K562 (cell line): ENCODE measurements at regions of chr4 and their contacts with region 1.

Region 1: DNA sequence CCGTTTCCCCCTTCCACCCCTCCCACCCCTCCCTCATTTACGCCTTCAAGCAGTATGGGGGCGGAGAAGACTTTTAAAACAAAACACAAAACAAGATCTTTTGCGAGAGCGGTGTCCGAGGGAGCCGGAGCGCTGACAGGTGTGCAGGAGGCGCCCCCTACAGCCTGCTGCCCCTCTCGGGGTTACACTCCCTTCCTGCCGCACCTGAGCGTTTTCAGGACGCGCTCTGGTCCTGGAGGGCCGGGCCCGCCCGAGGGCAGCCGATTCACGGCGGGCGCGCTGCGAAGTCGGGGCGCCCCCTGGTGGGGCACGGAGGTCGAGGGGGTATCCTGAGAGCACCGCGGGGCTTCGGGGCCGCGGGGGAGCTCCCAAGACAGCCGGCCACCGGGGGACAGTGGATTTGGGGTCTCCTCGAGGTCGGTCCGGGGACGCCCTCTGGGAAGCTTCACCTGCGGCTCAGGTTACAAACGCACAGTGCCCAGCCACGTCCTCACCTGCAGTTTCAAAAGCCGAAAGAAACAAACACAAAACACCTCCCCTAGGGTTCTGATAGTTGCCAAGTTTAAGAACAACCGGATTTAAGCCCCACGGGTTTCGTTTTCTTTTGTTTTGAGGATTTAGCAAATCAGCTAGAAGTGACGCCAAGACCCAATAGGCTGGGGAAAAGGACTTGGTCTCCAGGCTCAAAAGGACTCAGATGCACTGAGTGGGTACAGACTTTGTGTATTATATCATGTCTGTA is 8.0 kb upstream of the NEUROG2 start:
- DNase-seq: peak; percentile 73 to 80 (median 77)
- ATAC-seq: peak; percentile 94
- H3K4me3 ChIP-seq: peak overlapping the region; percentile 35
- H3K27ac ChIP-seq: no peak overlapping the region
- H3K4me1 ChIP-seq: peaks cover 0 to 12% of the 10 kb centered on the region in 2 experiments; a peak in 3 of 5 replicates
- H3K27me3 ChIP-seq: peaks cover 26 to 34% of the 10 kb centered on the region in 2 experiments
- CTCF ChIP-seq: peak; percentile 81 to 96 (median 87)
- EP300 ChIP-seq: no peak
- POLR2A ChIP-seq: no peak
- RAD21 ChIP-seq: peak; percentile 79 to 83

Region 2: GRCh38 chr4:111466811-111467604 is 1056.9 kb before region 1 on chr4:
- CTCF ChIA-PET with region 1: no interaction called
- POLR2A ChIA-PET with region 1: no interaction called
- in situ Hi-C with region 1: no loop called
- intact Hi-C with region 1: no loop called
- DNase-seq: no peak
- ATAC-seq: no peak
- H3K4me3 ChIP-seq: no peak overlapping the region
- H3K27ac ChIP-seq: no peak overlapping the region
- H3K4me1 ChIP-seq: no peaks in the 10 kb centered on the region
- H3K27me3 ChIP-seq: no peaks in the 10 kb centered on the region
- CTCF ChIP-seq: no peak
- EP300 ChIP-seq: no peak
- POLR2A ChIP-seq: no peak
- RAD21 ChIP-seq: no peak

Region 3: GRCh38 chr4:112075129-112075753 is 448.7 kb before region 1 on chr4:
- CTCF ChIA-PET with region 1: no interaction called
- POLR2A ChIA-PET with region 1: no interaction called
- in situ Hi-C with region 1: no loop called
- intact Hi-C with region 1: loop called (anchors 5 kb)
- DNase-seq: peak; percentile 51 to 61 (median 54)
- ATAC-seq: peak; percentile 94
- H3K4me3 ChIP-seq: no peak overlapping the region
- H3K27ac ChIP-seq: no peak overlapping the region
- H3K4me1 ChIP-seq: no peaks in the 10 kb centered on the region
- H3K27me3 ChIP-seq: no peaks in the 10 kb centered on the region
- CTCF ChIP-seq: peak; percentile 60 to 82 (median 81)
- EP300 ChIP-seq: no peak
- POLR2A ChIP-seq: no peak
- RAD21 ChIP-seq: peak; percentile 34 to 70; a peak in 3 of 4 replicates

Region 4: DNA sequence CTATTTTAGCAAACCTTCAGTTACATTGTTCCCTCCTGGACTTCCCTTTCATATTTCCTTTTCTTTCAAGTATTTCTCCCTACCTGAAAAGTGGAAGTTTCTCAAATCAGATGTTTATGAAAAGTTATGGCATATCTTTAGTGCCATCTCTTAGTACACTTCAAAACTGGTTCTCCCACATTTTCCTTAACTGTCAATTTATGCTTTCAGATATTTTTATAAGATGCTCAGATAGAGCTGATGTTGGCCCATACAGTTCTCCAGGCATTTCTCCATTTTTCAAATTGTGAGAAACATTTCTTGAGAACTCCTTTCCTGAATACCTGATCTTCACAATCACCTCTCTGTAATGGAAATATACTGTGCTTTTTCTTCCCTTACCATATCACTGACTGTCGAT is 324.9 kb before region 1 on chr4:
- CTCF ChIA-PET with region 1: no interaction called
- POLR2A ChIA-PET with region 1: no interaction called
- in situ Hi-C with region 1: no loop called
- intact Hi-C with region 1: no loop called
- DNase-seq: no peak
- ATAC-seq: no peak
- H3K4me3 ChIP-seq: no peak overlapping the region
- H3K27ac ChIP-seq: no peak overlapping the region
- H3K4me1 ChIP-seq: no peaks in the 10 kb centered on the region
- H3K27me3 ChIP-seq: no peaks in the 10 kb centered on the region
- CTCF ChIP-seq: no peak
- EP300 ChIP-seq: no peak
- POLR2A ChIP-seq: no peak
- RAD21 ChIP-seq: no peak

Region 5: GRCh38 chr4:112214390-112215264 is 309.3 kb before region 1 on chr4:
- CTCF ChIA-PET with region 1: interaction called, 9 read pairs
- POLR2A ChIA-PET with region 1: no interaction called
- in situ Hi-C with region 1: no loop called
- intact Hi-C with region 1: loop called (anchors 5 kb)
- DNase-seq: peak; percentile 31 to 34 (median 32)
- ATAC-seq: peak; percentile 76
- H3K4me3 ChIP-seq: no peak overlapping the region
- H3K27ac ChIP-seq: no peak overlapping the region
- H3K4me1 ChIP-seq: no peaks in the 10 kb centered on the region
- H3K27me3 ChIP-seq: no peaks in the 10 kb centered on the region
- CTCF ChIP-seq: peak; percentile 23 to 67 (median 45); a peak in 3 of 6 replicates
- EP300 ChIP-seq: no peak
- POLR2A ChIP-seq: no peak
- RAD21 ChIP-seq: peak; percentile 59

Region 6: DNA sequence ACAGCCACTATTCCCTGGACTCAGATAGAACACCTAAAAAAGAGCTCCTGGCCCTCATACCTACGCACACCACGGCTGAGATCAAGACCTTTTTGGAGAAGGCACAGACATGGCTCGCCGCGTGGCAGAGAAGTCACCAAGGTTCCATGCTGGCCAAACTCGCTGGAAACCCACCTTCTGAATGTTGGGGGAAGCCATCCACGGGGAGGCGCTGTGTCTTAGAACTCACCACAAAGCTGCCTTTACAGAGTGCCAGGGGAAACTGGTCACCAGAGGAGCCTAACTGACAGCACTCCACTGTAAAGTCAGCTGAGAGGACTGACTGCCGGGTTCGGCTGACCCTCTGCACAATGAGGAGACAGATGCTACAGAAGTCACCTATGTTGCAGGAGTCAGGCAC is 105.8 kb before region 1 on chr4:
- CTCF ChIA-PET with region 1: no interaction called
- POLR2A ChIA-PET with region 1: no interaction called
- in situ Hi-C with region 1: no loop called
- intact Hi-C with region 1: loop called (anchors 5 kb)
- DNase-seq: peak in 2 of 4 experiments; percentile 12 to 15
- ATAC-seq: peak; percentile 69
- H3K4me3 ChIP-seq: no peak overlapping the region
- H3K27ac ChIP-seq: no peak overlapping the region
- H3K4me1 ChIP-seq: no peaks in the 10 kb centered on the region
- H3K27me3 ChIP-seq: 0 out of 5 replicates have a peak, but pooled peaks cover 0 to 9% of the 10 kb centered on the region in 2 experiments
- CTCF ChIP-seq: peak; percentile 35 to 44 (median 39); a peak in 3 of 6 replicates
- EP300 ChIP-seq: no peak
- POLR2A ChIP-seq: no peak
- RAD21 ChIP-seq: 0 out of 4 replicates have a peak, but pooled peaks of 1 of the 2 experiments have one; percentile 11

Region 7: GRCh38 chr4:112765317-112765975 is 241.5 kb after region 1 on chr4:
- CTCF ChIA-PET with region 1: no interaction called
- POLR2A ChIA-PET with region 1: no interaction called
- in situ Hi-C with region 1: loop called (anchors 10 kb)
- intact Hi-C with region 1: loop called (anchors 5 kb)
- DNase-seq: peak; percentile 34 to 65 (median 48)
- ATAC-seq: peak; percentile 89
- H3K4me3 ChIP-seq: no peak overlapping the region
- H3K27ac ChIP-seq: no peak overlapping the region
- H3K4me1 ChIP-seq: 0 out of 5 replicates have a peak, but pooled peaks cover 0 to 3% of the 10 kb centered on the region in 2 experiments
- H3K27me3 ChIP-seq: peaks cover 0 to 7% of the 10 kb centered on the region in 2 experiments; a peak in 1 of 5 replicates
- CTCF ChIP-seq: peak; percentile 45 to 61 (median 51); a peak in 5 of 6 replicates
- EP300 ChIP-seq: no peak
- POLR2A ChIP-seq: no peak
- RAD21 ChIP-seq: peak in 1 of 2 experiments; percentile 41; a peak in 2 of 4 replicates